Pancreas (tissue), 10 donors: ENCODE measurements at regions of chr17 and their contacts with region 1.

Region 1: DNA sequence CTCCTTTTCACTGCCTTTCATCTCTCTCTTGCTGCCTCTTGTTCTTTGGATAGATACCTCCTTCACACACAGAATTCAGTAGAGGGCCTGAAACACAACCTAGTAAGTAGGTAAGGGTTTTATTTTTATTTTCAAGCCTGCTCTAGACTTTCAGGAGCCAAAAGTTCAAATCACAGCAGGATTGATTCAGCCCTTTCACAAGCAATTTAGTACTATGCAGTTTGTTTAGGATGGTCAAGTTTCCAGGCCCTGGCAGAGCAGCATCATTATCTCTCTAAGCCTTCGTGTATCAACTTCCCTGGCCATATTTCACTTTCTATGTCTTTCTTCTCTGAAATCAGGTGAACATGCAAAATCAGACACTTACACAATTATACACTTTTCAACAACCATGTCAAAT is 148.8 kb upstream of the CORO6 start:
- DNase-seq: no peak
- ATAC-seq: no peak
- H3K4me3 ChIP-seq: no peak overlapping the region
- H3K27ac ChIP-seq: no peak overlapping the region
- H3K4me1 ChIP-seq: no peaks in the 10 kb centered on the region
- H3K27me3 ChIP-seq: no peaks in the 10 kb centered on the region
- CTCF ChIP-seq: no peak

Region 2: GRCh38 chr17:29645515-29646051 is 126.0 kb before region 1 on chr17:
- intact Hi-C with region 1: loop called in 1 of 3 experiments (anchors 10 kb)
- DNase-seq: peak in 1 of 6 donors; percentile 12
- ATAC-seq: peak in 3 of 4 donors; percentile 50 to 63 (median 62)
- H3K4me3 ChIP-seq: no peak overlapping the region
- H3K27ac ChIP-seq: no peak overlapping the region
- H3K4me1 ChIP-seq: no peaks in the 10 kb centered on the region
- H3K27me3 ChIP-seq: no peaks in the 10 kb centered on the region
- CTCF ChIP-seq: no peak

Region 3: DNA sequence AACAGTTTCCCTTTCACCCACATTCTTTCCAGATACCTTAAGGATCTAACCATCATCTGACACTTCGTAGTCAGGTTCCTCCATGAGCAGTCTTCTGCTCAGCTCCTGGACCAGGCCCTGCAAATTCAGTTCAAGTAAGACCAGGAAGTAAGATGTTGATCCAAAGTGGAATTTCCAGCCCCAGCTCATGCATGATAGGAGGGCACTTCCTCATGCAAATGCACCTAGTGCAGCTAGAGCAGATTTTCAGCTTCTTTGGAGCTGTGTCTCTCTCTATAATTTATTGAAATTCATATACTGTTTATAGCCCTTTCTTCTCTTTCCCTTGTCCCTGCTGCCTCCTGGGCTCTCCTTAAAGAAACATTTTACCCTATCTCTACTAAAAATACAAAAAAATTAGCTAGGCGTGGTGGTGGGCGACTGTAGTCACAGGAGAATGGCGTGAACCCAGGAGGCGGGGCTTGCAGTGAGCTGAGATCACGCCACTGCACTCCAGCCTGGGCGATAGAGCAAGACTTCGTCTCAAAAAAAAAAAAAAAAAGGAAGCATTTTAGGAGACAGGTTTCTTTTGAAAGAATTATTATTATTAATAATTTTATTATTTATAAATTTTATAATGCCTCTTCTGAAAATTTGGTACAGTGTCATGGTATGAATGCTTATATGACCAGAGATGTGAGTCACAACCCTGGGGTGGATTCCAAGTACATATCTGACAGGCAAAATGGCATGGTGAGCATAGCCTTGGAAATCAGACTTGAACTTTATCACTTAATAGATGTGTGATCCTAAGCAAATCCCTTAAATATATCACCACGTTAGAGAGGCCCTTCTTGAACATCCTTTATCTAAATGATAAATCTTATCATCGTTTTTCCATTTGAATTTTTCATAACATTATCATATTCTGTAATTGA is 64.1 kb after region 1 on chr17:
- intact Hi-C with region 1: no loop called
- DNase-seq: no peak
- ATAC-seq: peak in 3 of 4 donors; percentile 42 to 60 (median 58)
- H3K4me3 ChIP-seq: no peak overlapping the region
- H3K27ac ChIP-seq: no peak overlapping the region
- H3K4me1 ChIP-seq: no peaks in the 10 kb centered on the region
- H3K27me3 ChIP-seq: no peaks in the 10 kb centered on the region
- CTCF ChIP-seq: no peak

Region 4: DNA sequence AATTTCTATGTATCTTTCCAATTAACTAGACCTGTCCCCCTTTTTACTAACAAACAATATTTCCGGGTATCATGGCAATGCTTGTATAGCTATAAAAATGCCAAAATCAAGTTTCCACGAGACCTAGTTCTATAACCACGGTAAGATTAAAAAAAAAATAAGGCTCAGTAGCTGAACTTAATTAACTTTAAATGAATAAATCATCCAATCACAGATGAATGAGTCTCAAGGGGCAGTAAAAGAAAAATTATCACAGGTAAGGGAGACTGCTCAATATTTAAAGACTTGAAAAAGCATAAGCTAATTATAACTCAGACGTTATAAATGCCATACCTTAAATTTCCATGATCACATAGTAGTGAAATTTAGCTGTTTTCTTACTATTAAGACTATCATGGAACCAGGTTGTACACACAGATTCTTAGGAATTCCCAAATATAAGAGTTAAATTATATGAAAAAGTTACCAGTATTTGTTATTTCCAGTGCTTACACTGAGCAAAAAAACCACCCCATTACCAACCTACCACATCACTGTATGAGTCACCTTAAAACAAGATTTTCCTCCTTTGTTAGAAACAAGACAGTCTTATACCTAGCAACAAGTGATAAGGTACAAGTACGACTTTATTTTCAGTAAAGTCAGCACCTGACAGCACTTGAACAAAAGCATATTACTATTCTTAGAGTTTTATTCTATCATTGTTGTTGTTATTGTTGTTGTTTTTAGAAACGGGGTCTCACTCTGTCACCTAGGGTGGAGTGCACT is 137.9 kb after region 1 on chr17:
- intact Hi-C with region 1: no loop called
- DNase-seq: no peak
- ATAC-seq: peak in 1 of 4 donors; percentile 54
- H3K4me3 ChIP-seq: no peak overlapping the region
- H3K27ac ChIP-seq: no peak overlapping the region
- H3K4me1 ChIP-seq: peaks cover 7 to 19% (median 16%) of the 10 kb centered on the region in 3 donors
- H3K27me3 ChIP-seq: no peaks in the 10 kb centered on the region
- CTCF ChIP-seq: no peak